A673 (cell line): ENCODE measurements at regions of chr12 and their contacts with region 1.

Region 1: GRCh38 chr12:7933255-7933729 is 2.7 kb downstream of the SLC2A3 start:
- DNase-seq: peak; percentile 97
- H3K4me3 ChIP-seq: peak overlapping the region; percentile 59
- H3K27ac ChIP-seq: peak overlapping the region; percentile 70
- H3K4me1 ChIP-seq: peaks cover 31% of the 10 kb centered on the region
- H3K27me3 ChIP-seq: no peaks in the 10 kb centered on the region
- CTCF ChIP-seq: peak; percentile 90

Region 2: GRCh38 chr12:7439579-7440505 is 493.4 kb before region 1 on chr12:
- CTCF ChIA-PET with region 1: interaction called, 12 read pairs
- POLR2A ChIA-PET with region 1: no interaction called
- intact Hi-C with region 1: no loop called
- DNase-seq: peak; percentile 87
- H3K4me3 ChIP-seq: peak overlapping the region; percentile 51
- H3K27ac ChIP-seq: peak overlapping the region; percentile 74
- H3K4me1 ChIP-seq: no peaks in the 10 kb centered on the region
- H3K27me3 ChIP-seq: no peaks in the 10 kb centered on the region
- CTCF ChIP-seq: no peak

Region 3: GRCh38 chr12:7959701-7960121 is 26.4 kb after region 1 on chr12:
- CTCF ChIA-PET with region 1: interaction called, 30 read pairs
- POLR2A ChIA-PET with region 1: interaction called, 29 read pairs
- intact Hi-C with region 1: loop called (anchors 1 kb)
- DNase-seq: peak; percentile 19
- H3K4me3 ChIP-seq: no peak overlapping the region
- H3K27ac ChIP-seq: peak overlapping the region; percentile 38
- H3K4me1 ChIP-seq: peaks cover 22% of the 10 kb centered on the region
- H3K27me3 ChIP-seq: no peaks in the 10 kb centered on the region
- CTCF ChIP-seq: no peak

Region 4: DNA sequence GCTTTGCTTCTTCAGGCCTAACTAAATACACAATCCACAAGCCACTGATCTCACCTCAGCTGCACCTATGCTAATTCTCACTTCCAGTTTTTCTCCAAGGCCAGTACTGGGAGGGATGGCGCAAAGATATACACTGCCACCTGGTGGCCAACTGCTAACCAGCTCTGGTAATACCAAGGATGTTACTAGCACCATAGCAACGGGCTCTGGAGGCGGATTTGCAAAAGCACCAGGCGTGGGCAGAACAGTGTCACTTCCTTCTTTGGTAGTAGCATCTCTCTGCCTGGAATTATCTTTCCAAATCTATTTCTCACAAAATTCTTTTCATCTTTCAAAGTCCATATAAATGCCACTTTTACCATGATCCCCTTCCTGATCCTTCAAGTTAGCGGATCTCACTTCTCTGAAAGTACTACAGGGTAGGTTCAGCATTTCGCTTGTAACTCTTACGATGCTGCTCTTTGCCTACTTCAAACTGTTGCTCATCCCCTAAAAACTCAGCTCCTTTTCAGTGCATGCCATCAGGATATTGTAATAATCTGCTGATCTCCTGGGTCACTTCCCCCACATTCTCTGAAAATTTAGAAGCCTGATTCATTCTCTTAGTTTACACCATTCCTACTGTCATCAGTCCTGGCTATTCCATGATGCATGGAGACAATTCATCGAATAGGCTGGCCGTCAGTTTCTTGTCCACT is 62.1 kb after region 1 on chr12:
- CTCF ChIA-PET with region 1: interaction called, 26 read pairs
- POLR2A ChIA-PET with region 1: no interaction called
- intact Hi-C with region 1: loop called (anchors 1 kb)
- DNase-seq: peak; percentile 89
- H3K4me3 ChIP-seq: no peak overlapping the region
- H3K27ac ChIP-seq: no peak overlapping the region
- H3K4me1 ChIP-seq: peaks cover 3% of the 10 kb centered on the region
- H3K27me3 ChIP-seq: no peaks in the 10 kb centered on the region
- CTCF ChIP-seq: peak; percentile 87